AG04450 (cell line): ENCODE measurements at regions of chr3 and their contacts with region 1.

Region 1: GRCh38 chr3:177050501-177051237 is 146.6 kb downstream of the TBL1XR1 start:
- DNase-seq: peak; percentile 16
- H3K4me3 ChIP-seq: no peak overlapping the region
- H3K27ac ChIP-seq: no peak overlapping the region
- H3K27me3 ChIP-seq: no peaks in the 10 kb centered on the region
- CTCF ChIP-seq: peak; percentile 57

Region 2: GRCh38 chr3:176939022-176939817 is 111.4 kb before region 1 on chr3:
- CTCF ChIA-PET with region 1: no interaction called
- POLR2A ChIA-PET with region 1: no interaction called
- DNase-seq: peak; percentile 65
- H3K4me3 ChIP-seq: no peak overlapping the region
- H3K27ac ChIP-seq: no peak overlapping the region
- H3K27me3 ChIP-seq: no peaks in the 10 kb centered on the region
- CTCF ChIP-seq: peak; percentile 81

Region 3: GRCh38 chr3:176987901-176988650 is 62.6 kb before region 1 on chr3:
- CTCF ChIA-PET with region 1: interaction called, 12 read pairs
- POLR2A ChIA-PET with region 1: no interaction called
- DNase-seq: no peak
- H3K4me3 ChIP-seq: no peak overlapping the region
- H3K27ac ChIP-seq: no peak overlapping the region
- H3K27me3 ChIP-seq: no peaks in the 10 kb centered on the region
- CTCF ChIP-seq: no peak

Region 4: DNA sequence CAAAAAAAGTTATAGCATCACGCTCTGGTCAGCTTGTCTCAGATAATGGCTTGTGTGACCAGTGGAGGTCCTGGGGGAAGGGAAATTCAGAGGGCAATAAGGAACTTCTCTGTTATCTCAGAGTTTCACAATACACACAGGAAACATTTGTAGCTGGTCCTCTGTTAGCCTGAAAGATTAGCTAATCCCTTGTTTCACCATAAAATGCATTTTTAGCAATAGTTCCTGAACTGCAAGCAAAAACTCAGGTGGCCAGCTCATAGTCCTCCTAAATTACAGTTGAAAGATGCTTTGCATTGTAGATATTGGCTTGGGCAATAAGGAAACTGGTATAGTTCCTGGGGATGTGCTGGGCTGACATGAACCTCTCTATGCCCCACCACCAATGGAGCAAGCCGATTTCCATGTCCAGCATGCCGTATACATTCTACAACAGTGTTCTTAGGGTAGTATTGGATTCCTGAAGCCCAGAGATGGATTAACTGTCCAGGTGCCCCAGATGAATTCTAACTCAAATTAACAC is 288.1 kb after region 1 on chr3:
- CTCF ChIA-PET with region 1: no interaction called
- POLR2A ChIA-PET with region 1: interaction called, 10 read pairs
- DNase-seq: no peak
- H3K4me3 ChIP-seq: no peak overlapping the region
- H3K27ac ChIP-seq: no peak overlapping the region
- H3K27me3 ChIP-seq: no peaks in the 10 kb centered on the region
- CTCF ChIP-seq: no peak